ENCODE measurements at regions of chr1 and their contacts with region 1.

Region 1: DNA sequence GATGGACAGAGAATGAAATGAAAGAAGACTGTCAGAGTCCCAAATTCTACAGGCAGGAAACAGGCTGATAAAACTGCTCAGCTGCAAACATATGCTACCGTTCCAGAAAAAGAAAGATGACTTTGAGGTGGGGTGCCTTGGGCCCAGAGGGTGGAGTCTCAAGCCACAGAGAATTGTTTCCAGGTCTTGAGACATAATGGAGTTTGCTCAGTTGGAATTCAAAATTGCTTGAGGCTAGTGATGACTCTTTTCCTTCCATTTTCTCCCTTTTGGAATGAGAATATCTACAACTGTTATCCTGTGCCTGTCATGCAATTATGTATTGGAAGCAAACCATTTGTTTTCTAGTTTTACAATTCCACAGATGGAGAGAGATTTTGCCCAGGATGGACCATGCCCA is 23.6 kb upstream of the PSEN2 start:
- DNase-seq: no peak
- H3K4me3 ChIP-seq: no peak overlapping the region
- H3K4me3 Mint-ChIP-seq: no peak overlapping the region
- H3K27ac ChIP-seq: no peak overlapping the region
- H3K27ac Mint-ChIP-seq: no peak overlapping the region
- H3K4me1 ChIP-seq: no peaks in the 10 kb centered on the region
- H3K4me1 Mint-ChIP-seq: no peaks in the 10 kb centered on the region
- H3K27me3 ChIP-seq: no peaks in the 10 kb centered on the region
- H3K27me3 Mint-ChIP-seq: peaks cover 3 to 6% of the 10 kb centered on the region in 2 donors

Region 2: DNA sequence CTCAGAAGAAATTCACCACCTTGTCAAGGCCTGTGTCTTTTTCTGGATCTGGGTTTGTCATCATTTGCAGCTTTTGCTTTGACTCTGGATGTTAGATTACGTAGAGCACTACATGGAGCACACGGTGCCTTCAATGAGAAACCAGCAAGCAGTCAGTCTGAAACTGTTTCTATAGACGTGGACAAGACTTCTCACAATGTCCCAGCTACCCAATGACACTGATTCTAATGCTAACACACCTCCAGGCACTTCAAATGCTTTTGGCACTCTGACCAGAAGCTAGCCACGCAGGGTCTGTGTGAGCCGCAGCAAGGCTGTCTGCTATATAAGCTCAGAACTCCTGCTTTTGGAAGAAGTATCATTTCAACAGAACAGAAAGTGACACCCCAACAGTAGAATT is 145.9 kb before region 1 on chr1:
- CTCF ChIA-PET with region 1: no interaction called
- POLR2A ChIA-PET with region 1: interaction called, 10 read pairs
- DNase-seq: no peak
- H3K4me3 ChIP-seq: no peak overlapping the region
- H3K4me3 Mint-ChIP-seq: peak overlapping the region in 5 of 7 donors; percentile 9 to 60 (median 21)
- H3K27ac ChIP-seq: no peak overlapping the region
- H3K27ac Mint-ChIP-seq: peak overlapping the region; percentile 56 to 99 (median 84)
- H3K4me1 ChIP-seq: peaks cover 92% of the 10 kb centered on the region
- H3K4me1 Mint-ChIP-seq: peaks cover 85 to 92% (median 92%) of the 10 kb centered on the region in 3 donors
- H3K27me3 ChIP-seq: no peaks in the 10 kb centered on the region
- H3K27me3 Mint-ChIP-seq: peaks cover 0 to 1% of the 10 kb centered on the region in 2 donors

Region 3: DNA sequence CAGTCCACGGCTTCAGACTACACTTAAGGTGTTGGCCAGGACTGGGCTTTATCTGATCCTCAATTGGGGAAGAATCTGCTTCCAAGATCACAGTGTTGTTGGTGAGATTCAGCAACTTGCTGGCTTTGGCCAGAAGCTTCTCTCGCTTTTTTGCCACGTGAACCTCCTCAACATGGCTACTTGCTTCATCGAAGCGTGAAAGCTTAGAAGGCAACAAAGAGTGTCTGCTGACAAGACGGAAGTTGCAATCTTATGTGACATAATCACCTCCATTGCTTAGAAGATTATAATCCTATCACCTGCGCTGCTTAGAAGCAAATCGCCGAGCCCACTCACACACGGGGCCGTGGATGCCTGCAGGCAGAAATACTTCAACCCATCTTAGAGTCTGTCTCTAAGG is 97.3 kb before region 1 on chr1:
- CTCF ChIA-PET with region 1: no interaction called
- POLR2A ChIA-PET with region 1: no interaction called
- DNase-seq: no peak
- H3K4me3 ChIP-seq: no peak overlapping the region
- H3K4me3 Mint-ChIP-seq: no peak overlapping the region
- H3K27ac ChIP-seq: no peak overlapping the region
- H3K27ac Mint-ChIP-seq: peak overlapping the region in 1 of 8 donors; percentile 22
- H3K4me1 ChIP-seq: peaks cover 5% of the 10 kb centered on the region
- H3K4me1 Mint-ChIP-seq: peaks cover 5 to 8% (median 7%) of the 10 kb centered on the region in 3 donors
- H3K27me3 ChIP-seq: no peaks in the 10 kb centered on the region
- H3K27me3 Mint-ChIP-seq: peaks cover 0 to 4% of the 10 kb centered on the region in 2 donors